Sigmoid colon (tissue), 7 donors: ENCODE measurements at regions of chr3 and their contacts with region 1.

Region 1: DNA sequence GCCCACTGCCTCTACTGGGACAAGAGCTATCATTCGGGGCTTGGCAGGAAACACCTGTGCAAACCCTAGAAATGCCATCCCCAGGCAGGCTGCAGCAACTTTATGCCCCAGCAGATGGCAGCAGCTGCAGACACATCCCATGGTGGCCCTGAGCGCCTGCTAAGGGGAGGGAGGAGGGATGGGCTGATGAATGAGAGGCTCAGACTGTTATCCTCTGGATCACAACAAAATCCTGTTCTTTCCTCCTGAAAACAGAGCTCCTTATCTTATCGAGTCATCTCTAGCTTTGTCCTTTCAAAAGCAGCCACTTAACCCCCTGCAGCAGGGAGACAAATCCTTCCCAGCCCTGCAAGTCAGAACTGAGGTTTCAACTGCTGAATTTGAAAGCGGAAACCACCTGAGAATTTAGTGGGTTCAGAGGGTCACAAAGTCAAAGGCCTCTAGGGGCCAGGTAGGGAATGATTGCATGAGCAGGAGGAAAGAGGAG is 90.6 kb upstream of the PROK2 start:
- DNase-seq: peak; percentile 85
- H3K4me3 ChIP-seq: no peak overlapping the region
- H3K27ac ChIP-seq: no peak overlapping the region
- H3K4me1 ChIP-seq: peaks cover 0 to 7% (median 3%) of the 10 kb centered on the region in 4 donors
- H3K27me3 ChIP-seq: no peaks in the 10 kb centered on the region
- CTCF ChIP-seq: peak; percentile 46 to 83 (median 74)
- EP300 ChIP-seq: no peak
- POLR2A ChIP-seq: no peak

Region 2: GRCh38 chr3:72255791-72256559 is 380.5 kb after region 1 on chr3:
- intact Hi-C with region 1: loop called (anchors 10 kb)
- DNase-seq: peak; percentile 83
- H3K4me3 ChIP-seq: no peak overlapping the region
- H3K27ac ChIP-seq: peak overlapping the region in 2 of 4 donors; percentile 52 to 58
- H3K4me1 ChIP-seq: peaks cover 0 to 26% (median 19%) of the 10 kb centered on the region in 4 donors
- H3K27me3 ChIP-seq: no peaks in the 10 kb centered on the region
- CTCF ChIP-seq: peak in 2 of 4 experiments; percentile 17
- EP300 ChIP-seq: peak in 1 of 4 donors; percentile 7
- POLR2A ChIP-seq: no peak